ENCODE measurements at regions of chr20 and their contacts with region 1.

Region 1: DNA sequence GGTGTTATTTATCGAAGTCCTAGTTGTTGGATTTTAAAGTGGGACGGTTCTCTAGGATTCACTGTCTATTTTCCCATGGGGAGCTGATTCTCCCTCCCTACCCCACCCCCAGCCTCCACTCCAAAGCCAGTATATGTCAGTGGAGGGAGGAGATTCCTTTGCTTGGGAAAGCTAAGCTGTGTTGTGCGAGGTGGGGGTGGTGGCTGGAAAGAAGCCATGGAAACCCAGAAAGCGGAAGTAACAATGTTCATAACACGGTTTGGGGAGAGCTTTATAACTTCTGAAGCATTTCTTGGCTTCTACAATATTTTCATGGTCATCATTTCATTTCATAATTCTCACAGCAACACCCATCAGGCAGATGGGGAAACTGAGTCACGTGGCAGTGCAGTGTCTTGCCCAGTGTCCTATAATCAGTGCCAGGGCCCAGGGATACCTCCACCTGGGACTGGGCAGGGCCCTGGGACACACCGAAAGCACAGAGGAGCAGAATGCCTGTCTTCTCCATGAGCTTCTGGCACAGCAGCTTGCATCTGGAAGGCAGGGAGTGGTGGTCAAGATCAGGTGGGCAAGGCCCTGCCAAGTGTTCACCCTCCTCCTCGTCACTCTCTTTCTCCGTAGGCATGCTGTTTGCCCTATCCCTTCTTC is 4.5 kb downstream of the SUN5 start:
- DNase-seq: no peak
- H3K4me3 ChIP-seq: no peak overlapping the region
- H3K27ac ChIP-seq: no peak overlapping the region
- H3K4me1 ChIP-seq: no peaks in the 10 kb centered on the region
- H3K27me3 ChIP-seq: no peaks in the 10 kb centered on the region
- CTCF ChIP-seq: no peak
- POLR2A ChIP-seq: no peak

Region 2: GRCh38 chr20:31859998-31860709 is 1139.6 kb before region 1 on chr20:
- intact Hi-C with region 1: loop called (anchors 10 kb)
- DNase-seq: peak in 1 of 2 donors; percentile 51
- H3K4me3 ChIP-seq: peak overlapping the region in 2 of 3 donors; percentile 61 to 78
- H3K27ac ChIP-seq: no peak overlapping the region
- H3K4me1 ChIP-seq: no peaks in the 10 kb centered on the region
- H3K27me3 ChIP-seq: peaks cover 0 to 8% of the 10 kb centered on the region in 2 donors
- CTCF ChIP-seq: no peak
- POLR2A ChIP-seq: no peak

Measured in breast epithelium (tissue), 4 donors.